Naive thymus-derived CD4-positive, alpha-beta T cell (primary cell): ENCODE measurements at regions of chr10 and their contacts with region 1.

Region 1: GRCh38 chr10:22003079-22003913 is at the start of gene DNAJC1:
- DNase-seq: peak; percentile 94 to 99 (median 97)
- ATAC-seq: peak; percentile 97
- H3K4me3 ChIP-seq: peak within 1 kb of the TSS; percentile 87
- H3K4me3 Mint-ChIP-seq: peak within 1 kb of the TSS; percentile 81 to 99 (median 94)
- H3K27ac ChIP-seq: peak within 1 kb of the TSS; percentile 82
- H3K27ac Mint-ChIP-seq: peak within 1 kb of the TSS; percentile 78 to 94 (median 92)
- H3K4me1 ChIP-seq: peaks cover 18 to 19% of the 10 kb centered on the region in 2 donors
- H3K4me1 Mint-ChIP-seq: peaks cover 7 to 42% (median 29%) of the 10 kb centered on the region in 7 donors
- H3K27me3 ChIP-seq: no peaks in the 10 kb centered on the region
- H3K27me3 Mint-ChIP-seq: peaks cover 0 to 15% (median 4%) of the 10 kb centered on the region in 5 donors
- total RNA-seq, gene DNAJC1: 11.0 to 23.9 (median 12.1) TPM

Region 2: GRCh38 chr10:21238717-21239116 is 764.6 kb before region 1 on chr10:
- CTCF ChIA-PET with region 1: no interaction called
- POLR2A ChIA-PET with region 1: no interaction called
- intact Hi-C with region 1: no loop called
- DNase-seq: no peak
- ATAC-seq: no peak
- H3K4me3 ChIP-seq: no peak overlapping the region
- H3K4me3 Mint-ChIP-seq: no peak overlapping the region
- H3K27ac ChIP-seq: no peak overlapping the region
- H3K27ac Mint-ChIP-seq: no peak overlapping the region
- H3K4me1 ChIP-seq: no peaks in the 10 kb centered on the region
- H3K4me1 Mint-ChIP-seq: no peaks in the 10 kb centered on the region
- H3K27me3 ChIP-seq: no peaks in the 10 kb centered on the region
- H3K27me3 Mint-ChIP-seq: peaks cover 0 to 24% (median 5%) of the 10 kb centered on the region in 5 donors

Region 3: DNA sequence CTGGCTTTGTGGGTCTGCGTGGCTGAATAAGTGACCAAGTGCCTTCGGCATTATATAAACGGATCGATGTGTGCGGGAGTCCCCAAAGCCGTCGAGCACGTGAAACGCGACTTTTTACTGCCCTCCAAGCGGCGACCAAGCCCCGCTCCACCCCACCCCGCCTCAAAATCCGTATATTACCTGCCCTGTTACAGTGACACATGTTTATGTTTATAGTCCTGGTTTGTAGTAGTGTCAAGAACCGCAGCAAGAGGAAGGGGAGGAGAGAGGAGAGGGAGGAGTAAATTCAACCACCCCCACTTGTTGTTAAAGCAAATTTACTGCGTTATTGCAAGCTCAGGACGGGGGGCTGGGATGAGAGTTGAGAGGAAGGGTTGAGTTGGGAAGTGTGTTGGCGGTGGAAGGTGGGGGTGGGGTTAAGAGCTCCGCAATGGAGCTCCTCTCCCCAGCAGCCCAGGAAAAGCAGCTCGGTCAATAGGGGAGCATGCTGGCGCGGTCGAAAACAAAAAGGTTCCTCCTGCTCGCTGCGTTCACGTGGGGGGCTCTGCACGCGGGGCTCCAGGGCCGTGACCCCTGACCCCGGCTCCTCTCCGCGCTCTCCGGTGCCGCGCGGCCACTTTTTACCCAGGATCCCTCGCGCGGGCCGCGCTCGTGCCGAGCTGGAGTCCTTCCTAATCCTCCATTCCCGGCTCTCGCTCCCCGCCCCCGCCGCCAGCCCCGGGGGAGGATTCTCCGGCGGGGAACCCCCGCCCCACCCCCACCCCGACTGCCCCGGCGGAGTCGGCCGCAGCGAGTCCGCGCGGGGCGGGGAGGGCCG is 477.7 kb before region 1 on chr10 and contains the start of gene SKIDA1:
- CTCF ChIA-PET with region 1: no interaction called
- POLR2A ChIA-PET with region 1: interaction called, 5 read pairs
- intact Hi-C with region 1: loop called (anchors 2 kb)
- DNase-seq: peak; percentile 31 to 72 (median 64)
- ATAC-seq: peak; percentile 73
- H3K4me3 ChIP-seq: peak within 1 kb of the TSS; percentile 79
- H3K4me3 Mint-ChIP-seq: peak within 1 kb of the TSS; percentile 85 to 99 (median 96)
- H3K27ac ChIP-seq: peak within 1 kb of the TSS; percentile 68
- H3K27ac Mint-ChIP-seq: peak within 1 kb of the TSS; percentile 87 to 98 (median 97)
- H3K4me1 ChIP-seq: peaks cover 4 to 17% of the 10 kb centered on the region in 2 donors
- H3K4me1 Mint-ChIP-seq: peaks cover 16 to 39% (median 38%) of the 10 kb centered on the region in 7 donors
- H3K27me3 ChIP-seq: peaks cover 4 to 6% of the 10 kb centered on the region in 2 donors
- H3K27me3 Mint-ChIP-seq: peaks cover 20 to 70% (median 38%) of the 10 kb centered on the region in 5 donors
- total RNA-seq, gene SKIDA1: 0.17 to 0.45 (median 0.28) TPM in 4 of 5 experiments, not detected in the other

Region 4: GRCh38 chr10:22022257-22023032 is 19.1 kb after region 1 on chr10:
- CTCF ChIA-PET with region 1: interaction called, 3 read pairs
- POLR2A ChIA-PET with region 1: interaction called, 8 read pairs
- intact Hi-C with region 1: loop called (anchors 1 kb)
- DNase-seq: peak in 8 of 9 donors; percentile 27 to 71 (median 63)
- ATAC-seq: peak; percentile 93
- H3K4me3 ChIP-seq: peak overlapping the region; percentile 46
- H3K4me3 Mint-ChIP-seq: peak overlapping the region; percentile 28 to 89 (median 84)
- H3K27ac ChIP-seq: peak overlapping the region; percentile 75
- H3K27ac Mint-ChIP-seq: peak overlapping the region; percentile 85 to 99 (median 94)
- H3K4me1 ChIP-seq: peaks cover 4 to 19% of the 10 kb centered on the region in 2 donors
- H3K4me1 Mint-ChIP-seq: peaks cover 14 to 31% (median 21%) of the 10 kb centered on the region in 7 donors
- H3K27me3 ChIP-seq: no peaks in the 10 kb centered on the region
- H3K27me3 Mint-ChIP-seq: peaks cover 0 to 8% (median 0%) of the 10 kb centered on the region in 5 donors

Region 5: DNA sequence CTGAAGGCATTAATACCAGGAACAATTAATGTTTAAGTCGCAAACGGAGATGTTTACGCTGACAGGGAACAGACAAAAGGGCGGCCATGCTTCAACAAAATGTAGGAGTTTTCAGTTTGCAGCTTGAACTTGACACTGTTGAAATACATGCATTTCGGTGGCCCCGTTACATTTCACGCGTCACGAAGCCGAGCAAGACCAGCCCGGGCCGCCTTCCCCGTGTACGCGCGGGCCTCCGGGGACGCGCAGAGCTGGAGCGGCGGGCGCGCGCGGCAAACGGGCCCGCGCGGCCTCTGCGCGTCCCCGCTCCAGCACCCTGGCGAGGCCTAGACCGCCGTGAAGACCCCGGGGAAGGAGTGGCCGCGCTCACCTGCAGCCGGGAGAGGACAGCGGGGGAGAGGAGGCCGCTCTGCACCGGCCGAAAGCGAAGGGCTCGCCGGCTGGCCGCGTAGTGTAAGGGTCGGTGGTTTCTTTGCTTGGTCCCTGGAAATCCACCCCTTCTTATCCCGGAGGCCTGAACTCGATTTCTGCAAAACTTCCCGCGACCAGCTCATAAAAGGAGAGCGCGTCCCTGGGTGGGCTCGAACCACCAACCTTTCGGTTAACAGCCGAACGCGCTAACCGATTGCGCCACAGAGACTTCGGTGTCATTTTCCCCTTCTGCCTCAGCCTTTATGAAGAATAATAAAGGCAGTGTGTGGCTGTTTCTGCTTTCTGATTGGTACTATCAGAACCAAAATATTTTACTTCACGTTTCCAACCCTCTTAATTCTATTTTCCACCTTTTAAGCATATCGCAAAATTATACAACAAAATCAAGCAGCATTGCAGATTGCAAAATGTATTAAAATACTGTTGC is 225.9 kb after region 1 on chr10:
- CTCF ChIA-PET with region 1: no interaction called
- POLR2A ChIA-PET with region 1: interaction called, 8 read pairs
- intact Hi-C with region 1: loop called (anchors 1 kb)
- DNase-seq: peak; percentile 74 to 94 (median 92)
- ATAC-seq: peak; percentile 95
- H3K4me3 ChIP-seq: peak overlapping the region; percentile 85
- H3K4me3 Mint-ChIP-seq: peak overlapping the region; percentile 84 to 99 (median 94)
- H3K27ac ChIP-seq: peak overlapping the region; percentile 70
- H3K27ac Mint-ChIP-seq: peak overlapping the region; percentile 96 to 100 (median 99)
- H3K4me1 ChIP-seq: peaks cover 6 to 8% of the 10 kb centered on the region in 2 donors
- H3K4me1 Mint-ChIP-seq: peaks cover 11 to 27% (median 15%) of the 10 kb centered on the region in 7 donors
- H3K27me3 ChIP-seq: no peaks in the 10 kb centered on the region
- H3K27me3 Mint-ChIP-seq: peaks cover 0 to 20% (median 5%) of the 10 kb centered on the region in 5 donors

Region 6: DNA sequence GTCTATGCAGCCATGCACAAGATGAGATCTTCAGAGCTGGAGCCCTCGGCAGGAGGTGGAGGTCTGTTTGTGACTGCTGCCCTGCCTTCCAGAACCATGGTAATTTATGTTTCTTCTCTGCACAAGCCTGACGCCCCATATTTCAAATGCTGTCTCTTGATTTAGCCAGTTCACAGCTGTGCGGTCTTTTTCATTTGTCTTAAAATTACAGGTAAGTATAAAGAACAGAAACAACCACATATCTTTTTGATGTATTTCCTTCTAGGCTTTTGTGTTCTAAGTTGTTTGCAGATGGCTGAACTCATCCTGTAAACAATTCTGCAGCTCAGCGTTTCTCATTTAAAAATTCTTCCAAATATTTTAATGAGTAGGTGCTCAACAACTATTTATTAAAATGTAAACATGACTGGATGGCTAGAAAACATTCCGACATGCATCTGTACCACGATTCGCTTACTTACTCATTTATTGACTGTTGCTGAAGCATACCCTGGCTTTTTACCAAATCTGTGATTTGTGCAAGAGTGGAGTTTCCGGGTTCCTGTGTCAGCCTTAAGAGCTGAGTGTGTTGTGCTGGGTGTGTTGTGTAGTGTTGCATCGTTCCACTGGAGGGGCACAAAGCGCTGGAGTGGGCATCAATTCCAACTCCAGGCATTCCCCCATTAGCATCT is 652.1 kb after region 1 on chr10:
- CTCF ChIA-PET with region 1: no interaction called
- POLR2A ChIA-PET with region 1: no interaction called
- intact Hi-C with region 1: loop called in 1 of 2 experiments (anchors 2 kb)
- DNase-seq: peak in 7 of 9 donors; percentile 69 to 90 (median 86)
- ATAC-seq: peak; percentile 89
- H3K4me3 ChIP-seq: peak overlapping the region; percentile 23
- H3K4me3 Mint-ChIP-seq: peak overlapping the region; percentile 67 to 87 (median 81)
- H3K27ac ChIP-seq: peak overlapping the region; percentile 54
- H3K27ac Mint-ChIP-seq: peak overlapping the region; percentile 82 to 97 (median 92)
- H3K4me1 ChIP-seq: peaks cover 84 to 88% of the 10 kb centered on the region in 2 donors
- H3K4me1 Mint-ChIP-seq: peaks cover 84 to 100% (median 90%) of the 10 kb centered on the region in 7 donors
- H3K27me3 ChIP-seq: no peaks in the 10 kb centered on the region
- H3K27me3 Mint-ChIP-seq: no peaks in the 10 kb centered on the region